ENCODE measurements at regions of chr6 and their contacts with region 1.

Region 1: DNA sequence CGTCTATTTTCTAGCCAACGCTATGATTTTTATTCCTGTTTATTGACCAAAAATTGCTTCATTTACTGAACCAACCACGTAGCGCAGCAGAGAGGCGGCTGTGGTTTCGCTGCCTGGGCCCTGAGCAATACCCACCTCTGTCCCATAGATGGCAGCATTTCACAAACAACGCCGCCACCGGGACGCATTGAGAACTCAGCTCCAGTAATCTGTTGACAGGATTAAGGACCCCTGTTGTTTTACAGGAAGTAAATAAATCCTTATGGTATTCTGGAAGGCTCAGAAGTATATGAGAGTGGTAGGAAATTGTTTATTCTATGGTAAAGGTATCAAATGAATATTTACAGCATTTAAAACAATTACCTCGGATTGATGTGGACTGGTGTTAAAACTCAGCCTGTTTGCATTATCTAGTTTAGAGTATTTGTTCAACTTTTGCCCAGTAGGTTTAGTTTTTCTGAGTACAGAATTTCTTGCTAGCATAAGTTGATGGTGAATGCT is 547.9 kb upstream of the SLC35B3 start:
- DNase-seq: peak; percentile 34
- CTCF ChIP-seq: peak; percentile 91

Region 2: DNA sequence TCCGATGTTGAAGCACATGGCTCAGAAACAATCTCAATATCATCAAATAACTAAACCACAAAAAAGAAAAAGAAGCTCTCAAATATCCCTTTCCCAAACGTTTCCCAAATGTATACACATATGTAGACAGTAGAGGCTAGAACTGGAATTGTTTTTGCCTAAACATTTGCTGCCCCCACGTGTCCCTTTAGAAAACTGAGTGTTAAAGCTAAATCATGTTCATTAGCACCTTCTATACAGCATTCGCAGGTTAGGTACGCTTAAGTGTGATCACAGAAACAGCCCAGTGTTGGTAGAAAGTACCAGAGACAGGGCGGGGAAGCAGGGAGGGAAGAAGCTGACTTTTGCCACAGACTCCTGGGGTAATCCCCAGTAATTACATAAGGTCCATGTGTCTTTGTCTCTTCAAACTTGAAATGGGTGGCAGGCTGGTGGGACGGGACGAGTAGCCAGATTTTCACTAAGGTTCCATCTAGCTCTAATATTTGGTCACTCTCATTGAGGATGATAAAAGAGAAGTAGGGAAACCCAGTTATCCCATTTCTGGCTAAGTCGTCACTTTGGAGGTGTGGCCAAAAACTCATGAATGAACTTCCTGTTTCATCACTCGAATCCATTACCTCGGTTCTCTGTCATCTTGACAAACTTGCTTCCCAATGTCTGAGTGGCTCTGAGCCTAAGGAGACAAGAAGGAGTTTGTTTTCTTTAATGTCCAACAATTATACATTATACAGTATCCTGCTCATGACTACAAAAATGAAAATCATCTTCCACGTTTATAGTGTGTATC is 1446.6 kb after region 1 on chr6:
- in situ Hi-C with region 1: loop called (anchors 25 kb)
- DNase-seq: peak; percentile 69
- CTCF ChIP-seq: peak; percentile 69

Measured in GM13977 (cell line).